ENCODE measurements at regions of chr14 and their contacts with region 1.

Region 1: GRCh38 chr14:74945823-74946682 is 9.3 kb downstream of the PGF start:
- DNase-seq: peak; percentile 41
- H3K4me3 ChIP-seq: no peak overlapping the region
- H3K27ac ChIP-seq: no peak overlapping the region
- H3K4me1 ChIP-seq: peaks cover 45% of the 10 kb centered on the region
- H3K27me3 ChIP-seq: no peaks in the 10 kb centered on the region
- CTCF ChIP-seq: peak; percentile 90 to 91

Region 2: DNA sequence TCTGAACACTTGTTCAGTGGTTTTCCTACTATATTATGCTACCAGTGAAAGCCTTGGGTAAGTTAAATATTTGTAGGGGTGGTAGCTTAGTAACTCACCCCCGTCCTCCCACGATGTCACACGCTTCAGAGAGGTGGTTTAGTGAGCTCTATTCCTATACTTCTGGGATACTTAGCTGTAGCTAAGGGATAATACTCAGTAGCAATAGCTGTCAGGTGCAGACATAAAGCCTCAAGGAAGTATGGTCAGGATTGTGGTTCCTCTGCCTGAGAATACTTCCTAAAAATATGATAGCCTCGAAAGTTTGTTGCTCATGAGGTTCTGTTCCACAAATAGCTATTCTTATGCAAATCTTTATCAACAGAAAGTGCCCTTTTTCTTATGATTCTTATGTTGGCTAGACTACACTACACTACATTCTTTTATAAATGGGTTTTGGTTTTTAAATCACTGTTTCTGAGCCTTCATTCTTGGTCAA is 52.4 kb before region 1 on chr14:
- CTCF ChIA-PET with region 1: no interaction called
- dilution Hi-C with region 1: no loop called
- in situ Hi-C with region 1: no loop called
- intact Hi-C with region 1: no loop called
- DNase-seq: no peak
- H3K4me3 ChIP-seq: no peak overlapping the region
- H3K27ac ChIP-seq: no peak overlapping the region
- H3K4me1 ChIP-seq: peaks cover 5% of the 10 kb centered on the region
- H3K27me3 ChIP-seq: no peaks in the 10 kb centered on the region
- CTCF ChIP-seq: no peak

Region 3: GRCh38 chr14:74905375-74906142 is 40.5 kb before region 1 on chr14:
- CTCF ChIA-PET with region 1: no interaction called
- dilution Hi-C with region 1: loop called (anchors 5 kb)
- in situ Hi-C with region 1: no loop called
- intact Hi-C with region 1: no loop called
- DNase-seq: peak; percentile 20
- H3K4me3 ChIP-seq: no peak overlapping the region
- H3K27ac ChIP-seq: no peak overlapping the region
- H3K4me1 ChIP-seq: no peaks in the 10 kb centered on the region
- H3K27me3 ChIP-seq: no peaks in the 10 kb centered on the region
- CTCF ChIP-seq: peak; percentile 88 to 96

Region 4: GRCh38 chr14:75002392-75003249 is 56.6 kb after region 1 on chr14 and contains the start of gene EIF2B2:
- CTCF ChIA-PET with region 1: interaction called, 3 read pairs
- dilution Hi-C with region 1: no loop called
- in situ Hi-C with region 1: loop called in 1 of 2 experiments (anchors 5 kb)
- intact Hi-C with region 1: loop called (anchors 1 kb)
- DNase-seq: peak; percentile 99
- H3K4me3 ChIP-seq: peak within 1 kb of the TSS; percentile 69 to 89 (median 80)
- H3K27ac ChIP-seq: peak within 1 kb of the TSS; percentile 87
- H3K4me1 ChIP-seq: peaks cover 18% of the 10 kb centered on the region
- H3K27me3 ChIP-seq: no peaks in the 10 kb centered on the region
- CTCF ChIP-seq: peak in 1 of 2 donors; percentile 13
- total RNA-seq, gene EIF2B2: 47.8 to 57.3 TPM

Region 5: DNA sequence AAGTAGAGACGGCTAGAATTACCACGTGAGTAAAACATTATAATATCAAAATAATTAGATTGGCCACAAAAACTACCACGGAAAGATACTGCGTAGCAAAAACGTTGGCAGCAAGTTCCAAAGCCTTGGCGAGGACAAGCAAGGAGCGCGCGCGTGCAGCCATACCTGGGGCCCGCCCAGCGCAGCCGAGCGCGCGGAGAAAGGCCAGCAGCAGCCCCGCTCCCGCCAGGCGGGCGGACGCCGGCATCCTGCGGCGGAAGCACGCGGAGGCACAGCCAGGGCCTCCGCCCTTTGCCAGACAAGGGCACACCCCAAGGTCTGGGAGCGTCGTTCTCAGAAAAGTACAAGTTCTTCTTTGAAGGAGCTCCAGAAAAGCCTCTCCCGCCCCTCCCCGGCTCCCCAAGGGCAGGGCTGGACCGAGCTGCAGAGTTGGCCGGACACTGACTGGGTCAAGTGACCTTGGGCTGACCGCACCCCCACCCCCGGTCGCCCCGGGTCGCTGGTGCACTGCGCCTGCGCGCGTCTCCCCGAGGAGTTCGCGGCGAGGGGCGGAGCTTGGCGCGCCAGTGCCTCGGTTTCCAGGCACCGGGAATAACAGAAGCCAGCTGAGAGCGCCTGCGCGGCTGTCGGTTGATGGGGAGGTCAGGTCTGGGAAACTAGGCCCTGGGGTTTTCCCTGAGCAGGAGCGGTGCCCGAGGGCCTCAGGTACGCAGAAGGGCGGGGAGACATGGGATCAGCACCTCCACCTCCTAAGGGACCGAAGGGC is 123.2 kb after region 1 on chr14 and contains the start of gene ZC2HC1C:
- CTCF ChIA-PET with region 1: interaction called, 3 read pairs
- dilution Hi-C with region 1: no loop called
- in situ Hi-C with region 1: loop called in 1 of 2 experiments (anchors 10 kb)
- intact Hi-C with region 1: no loop called
- DNase-seq: peak; percentile 78
- H3K4me3 ChIP-seq: peak within 1 kb of the TSS; percentile 50 to 64 (median 56)
- H3K27ac ChIP-seq: peak within 1 kb of the TSS; percentile 75
- H3K4me1 ChIP-seq: peaks cover 22% of the 10 kb centered on the region
- H3K27me3 ChIP-seq: no peaks in the 10 kb centered on the region
- CTCF ChIP-seq: no peak
- total RNA-seq, gene ZC2HC1C: 0.17 to 0.89 TPM

Region 6: GRCh38 chr14:75088574-75089373 is 142.7 kb after region 1 on chr14:
- CTCF ChIA-PET with region 1: interaction called, 4 read pairs
- dilution Hi-C with region 1: no loop called
- in situ Hi-C with region 1: no loop called
- intact Hi-C with region 1: loop called (anchors 1 kb)
- DNase-seq: peak; percentile 52
- H3K4me3 ChIP-seq: no peak overlapping the region
- H3K27ac ChIP-seq: no peak overlapping the region
- H3K4me1 ChIP-seq: peaks cover 3% of the 10 kb centered on the region
- H3K27me3 ChIP-seq: no peaks in the 10 kb centered on the region
- CTCF ChIP-seq: peak; percentile 77 to 82

Measured in mammary epithelial cell (primary cell).